Left cardiac atrium (tissue), 4 donors: ENCODE measurements at regions of chr1 and their contacts with region 1.

Region 1: GRCh38 chr1:59302871-59303270 is 6.0 kb downstream of the FGGY start:
- DNase-seq: no peak
- ATAC-seq: no peak

Region 2: DNA sequence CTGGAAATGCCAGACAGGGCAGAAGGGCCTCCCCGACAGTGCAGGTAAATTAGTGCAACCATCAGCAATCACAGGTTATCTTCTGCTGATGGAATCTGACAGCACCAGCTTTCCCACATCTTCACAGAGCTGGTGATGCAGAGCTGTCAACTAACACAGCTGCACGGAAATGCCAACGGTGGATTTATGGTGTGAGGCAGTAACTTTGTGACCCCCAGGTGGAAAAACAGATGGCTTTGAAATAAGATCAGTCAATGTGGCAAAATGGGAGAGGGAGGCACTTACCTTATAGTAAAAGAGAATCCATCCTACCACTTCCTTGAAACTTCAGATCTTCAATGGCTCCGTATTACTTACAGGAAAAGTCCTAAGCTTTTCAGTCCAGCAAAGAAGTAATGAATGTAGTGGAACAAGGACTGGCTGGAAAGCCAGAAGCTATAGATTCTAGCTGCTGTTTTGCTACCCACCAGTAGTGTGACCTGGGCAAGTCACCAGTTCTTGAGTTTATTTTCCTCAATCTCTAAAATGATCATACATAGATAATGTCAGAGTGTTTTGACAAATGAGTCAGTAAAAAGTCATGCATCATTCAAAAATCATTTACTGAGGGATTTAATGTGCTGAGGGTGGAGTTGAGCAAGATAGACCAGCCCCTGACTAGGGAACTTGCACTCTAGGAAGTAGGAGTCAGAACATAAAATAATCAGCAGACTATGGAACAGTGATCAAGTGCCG is 273.3 kb before region 1 on chr1:
- intact Hi-C with region 1: no loop called
- DNase-seq: no peak
- ATAC-seq: peak in 1 of 2 donors; percentile 16

Region 3: DNA sequence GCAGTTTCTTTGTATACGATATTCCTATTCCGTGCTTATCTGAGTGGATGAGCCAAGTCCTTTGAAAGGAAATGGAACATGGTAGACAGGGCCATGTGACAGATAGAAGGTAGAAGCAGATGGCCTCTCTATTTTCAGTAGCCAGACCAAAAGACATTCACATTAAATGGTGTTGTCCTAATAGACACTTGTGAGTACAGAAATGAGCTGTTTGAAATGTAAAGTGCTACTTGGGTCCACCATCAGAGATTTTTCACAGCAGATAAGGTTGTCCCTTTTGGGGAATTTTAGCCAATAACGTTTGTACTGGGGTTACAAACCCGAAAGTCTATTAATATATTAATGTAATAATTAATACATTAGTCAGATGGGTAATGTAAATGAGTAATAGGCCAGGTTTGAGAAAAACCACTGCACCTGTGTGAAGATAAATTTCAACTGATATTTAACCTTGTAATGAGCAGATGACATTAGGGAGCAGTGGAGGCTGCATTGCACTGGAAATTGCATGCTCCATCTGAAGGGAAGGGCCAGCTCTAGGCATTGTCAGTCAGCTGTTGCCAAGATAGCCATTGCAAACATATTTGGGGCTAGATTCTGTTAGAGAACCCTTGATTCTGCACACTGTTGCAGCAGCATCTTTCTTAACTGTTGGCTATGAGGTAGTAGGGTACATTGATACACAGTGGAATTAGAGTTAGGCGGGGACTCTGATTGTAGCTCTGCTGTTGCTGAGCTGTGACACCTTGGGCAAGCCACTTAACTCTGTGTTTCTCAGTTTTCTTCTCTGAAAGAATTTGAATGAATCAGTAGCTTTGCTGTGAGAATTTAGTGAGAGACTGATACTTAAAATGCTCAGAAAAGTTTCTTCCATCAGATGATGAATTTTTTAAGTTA is 37.8 kb after region 1 on chr1:
- intact Hi-C with region 1: no loop called
- DNase-seq: no peak
- ATAC-seq: no peak

Region 4: GRCh38 chr1:59682396-59683080 is 379.7 kb after region 1 on chr1:
- intact Hi-C with region 1: loop called in 1 of 2 experiments (anchors 5 kb)
- DNase-seq: no peak
- ATAC-seq: peak in 1 of 2 donors; percentile 27